ENCODE measurements at regions of chr6 and their contacts with region 1.

Region 1: DNA sequence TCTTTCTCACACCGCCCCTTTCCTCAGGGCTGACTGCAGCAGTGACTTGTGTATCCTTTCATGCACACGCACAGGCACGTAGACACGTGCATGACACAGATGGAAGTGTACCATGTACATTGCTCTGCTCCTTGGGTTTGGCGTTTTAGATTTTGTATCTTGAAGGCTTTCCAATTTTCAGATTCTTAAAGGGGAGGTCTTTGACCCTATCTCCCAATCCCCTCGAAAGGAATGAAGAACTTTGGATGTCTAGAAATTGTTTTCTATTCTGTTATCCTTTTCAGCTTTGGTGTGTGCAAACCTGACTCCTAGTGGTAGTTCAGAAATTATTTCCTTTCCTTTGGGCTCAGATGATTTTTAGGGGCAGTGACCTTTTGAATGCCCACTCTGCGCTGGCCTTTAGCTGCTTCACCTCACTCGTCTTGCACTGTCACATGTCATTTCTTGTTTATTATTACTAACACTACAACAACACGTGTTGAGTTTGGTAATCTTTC is 63.0 kb downstream of the HIVEP1 start:
- DNase-seq: peak; percentile 43
- ATAC-seq: no peak
- H3K4me3 ChIP-seq: no peak overlapping the region
- H3K4me3 Mint-ChIP-seq: no peak overlapping the region
- H3K27ac ChIP-seq: no peak overlapping the region
- H3K27ac Mint-ChIP-seq: no peak overlapping the region
- H3K4me1 ChIP-seq: peaks cover 0 to 6% of the 10 kb centered on the region in 2 donors
- H3K4me1 Mint-ChIP-seq: peaks cover 25% of the 10 kb centered on the region
- H3K27me3 ChIP-seq: no peaks in the 10 kb centered on the region
- H3K27me3 Mint-ChIP-seq: no peaks in the 10 kb centered on the region
- CTCF ChIP-seq: peak; percentile 69

Region 2: GRCh38 chr6:11700118-11700718 is 374.9 kb before region 1 on chr6:
- CTCF ChIA-PET with region 1: interaction called, 27 read pairs
- POLR2A ChIA-PET with region 1: no interaction called
- intact Hi-C with region 1: loop called (anchors 1 kb)
- DNase-seq: peak; percentile 61
- ATAC-seq: no peak
- H3K4me3 ChIP-seq: no peak overlapping the region
- H3K4me3 Mint-ChIP-seq: no peak overlapping the region
- H3K27ac ChIP-seq: no peak overlapping the region
- H3K27ac Mint-ChIP-seq: no peak overlapping the region
- H3K4me1 ChIP-seq: no peaks in the 10 kb centered on the region
- H3K4me1 Mint-ChIP-seq: no peaks in the 10 kb centered on the region
- H3K27me3 ChIP-seq: peaks cover 0 to 4% (median 2%) of the 10 kb centered on the region in 4 experiments
- H3K27me3 Mint-ChIP-seq: no peaks in the 10 kb centered on the region
- CTCF ChIP-seq: peak; percentile 69

Region 3: DNA sequence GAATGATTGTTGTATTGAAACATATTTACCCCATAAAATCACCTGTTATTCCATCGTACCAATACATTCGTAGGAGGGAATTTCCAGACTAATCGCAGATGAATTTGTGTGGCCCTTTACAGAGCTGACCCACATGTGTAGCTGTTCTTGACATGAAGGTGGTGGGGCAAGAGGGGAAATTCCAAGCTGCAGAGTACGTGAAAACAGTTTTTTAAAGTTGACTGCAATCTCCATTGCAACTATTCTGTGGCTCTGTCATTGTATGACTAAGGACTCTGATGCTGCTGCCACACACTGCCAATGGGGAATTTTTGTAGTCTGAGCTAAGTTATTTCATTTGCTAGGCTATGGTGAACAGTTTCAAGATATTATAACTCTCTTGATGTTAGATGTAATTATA is 250.1 kb before region 1 on chr6:
- CTCF ChIA-PET with region 1: interaction called, 7 read pairs
- POLR2A ChIA-PET with region 1: no interaction called
- intact Hi-C with region 1: loop called (anchors 1 kb)
- DNase-seq: peak; percentile 28
- ATAC-seq: peak; percentile 56
- H3K4me3 ChIP-seq: no peak overlapping the region
- H3K4me3 Mint-ChIP-seq: no peak overlapping the region
- H3K27ac ChIP-seq: no peak overlapping the region
- H3K27ac Mint-ChIP-seq: no peak overlapping the region
- H3K4me1 ChIP-seq: peaks cover 14 to 16% of the 10 kb centered on the region in 2 donors
- H3K4me1 Mint-ChIP-seq: peaks cover 30% of the 10 kb centered on the region
- H3K27me3 ChIP-seq: no peaks in the 10 kb centered on the region
- H3K27me3 Mint-ChIP-seq: no peaks in the 10 kb centered on the region
- CTCF ChIP-seq: no peak

Region 4: DNA sequence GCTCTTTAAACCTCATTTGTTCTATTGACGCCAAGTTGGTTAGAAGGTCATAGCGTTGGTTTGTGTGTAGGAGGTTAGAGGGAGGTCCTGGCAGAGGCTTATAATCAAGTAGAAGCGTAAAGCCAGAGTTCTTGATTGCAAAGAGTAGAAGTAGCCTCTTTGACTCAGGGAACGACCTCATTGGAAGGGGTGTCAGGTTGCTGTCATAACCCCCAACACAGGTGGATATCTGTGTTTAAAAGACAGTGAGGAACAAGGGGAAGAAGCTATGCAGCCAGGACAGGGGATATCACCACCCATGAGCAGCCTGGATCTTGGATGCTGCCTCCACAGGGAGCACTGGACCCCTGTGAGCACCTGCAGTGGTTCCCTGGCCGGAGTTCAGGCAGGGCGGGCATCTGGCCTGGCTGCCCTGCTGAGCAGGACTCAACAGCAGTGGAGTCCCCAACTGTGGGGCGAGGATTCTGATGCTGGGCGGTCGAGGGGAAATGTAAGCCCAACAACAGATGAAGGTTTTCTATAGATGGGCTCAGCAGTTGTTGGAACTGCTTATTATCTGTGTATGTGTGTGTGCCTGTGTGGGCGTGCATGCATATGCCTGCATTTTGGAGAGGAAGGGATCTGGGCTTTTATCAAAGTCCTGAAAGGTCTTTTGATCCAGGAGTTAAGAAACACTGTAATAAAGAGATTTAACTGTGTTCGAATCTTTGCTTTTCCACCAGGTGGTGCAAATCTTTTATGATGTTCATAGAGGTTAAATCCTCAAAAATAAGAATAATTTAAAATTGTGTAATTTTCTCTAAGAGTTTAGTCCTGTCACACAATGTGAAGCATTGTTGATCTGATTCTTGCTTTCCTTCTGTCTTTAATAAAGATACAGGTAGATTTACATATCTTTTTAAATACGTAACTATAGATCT is 35.3 kb before region 1 on chr6:
- CTCF ChIA-PET with region 1: interaction called, 4 read pairs
- POLR2A ChIA-PET with region 1: no interaction called
- intact Hi-C with region 1: loop called (anchors 5 kb)
- DNase-seq: no peak
- ATAC-seq: no peak
- H3K4me3 ChIP-seq: no peak overlapping the region
- H3K4me3 Mint-ChIP-seq: no peak overlapping the region
- H3K27ac ChIP-seq: peak overlapping the region in 1 of 2 donors; percentile 45
- H3K27ac Mint-ChIP-seq: peak overlapping the region; percentile 78
- H3K4me1 ChIP-seq: peaks cover 24 to 29% of the 10 kb centered on the region in 2 donors
- H3K4me1 Mint-ChIP-seq: peaks cover 61% of the 10 kb centered on the region
- H3K27me3 ChIP-seq: no peaks in the 10 kb centered on the region
- H3K27me3 Mint-ChIP-seq: no peaks in the 10 kb centered on the region
- CTCF ChIP-seq: no peak

Region 5: DNA sequence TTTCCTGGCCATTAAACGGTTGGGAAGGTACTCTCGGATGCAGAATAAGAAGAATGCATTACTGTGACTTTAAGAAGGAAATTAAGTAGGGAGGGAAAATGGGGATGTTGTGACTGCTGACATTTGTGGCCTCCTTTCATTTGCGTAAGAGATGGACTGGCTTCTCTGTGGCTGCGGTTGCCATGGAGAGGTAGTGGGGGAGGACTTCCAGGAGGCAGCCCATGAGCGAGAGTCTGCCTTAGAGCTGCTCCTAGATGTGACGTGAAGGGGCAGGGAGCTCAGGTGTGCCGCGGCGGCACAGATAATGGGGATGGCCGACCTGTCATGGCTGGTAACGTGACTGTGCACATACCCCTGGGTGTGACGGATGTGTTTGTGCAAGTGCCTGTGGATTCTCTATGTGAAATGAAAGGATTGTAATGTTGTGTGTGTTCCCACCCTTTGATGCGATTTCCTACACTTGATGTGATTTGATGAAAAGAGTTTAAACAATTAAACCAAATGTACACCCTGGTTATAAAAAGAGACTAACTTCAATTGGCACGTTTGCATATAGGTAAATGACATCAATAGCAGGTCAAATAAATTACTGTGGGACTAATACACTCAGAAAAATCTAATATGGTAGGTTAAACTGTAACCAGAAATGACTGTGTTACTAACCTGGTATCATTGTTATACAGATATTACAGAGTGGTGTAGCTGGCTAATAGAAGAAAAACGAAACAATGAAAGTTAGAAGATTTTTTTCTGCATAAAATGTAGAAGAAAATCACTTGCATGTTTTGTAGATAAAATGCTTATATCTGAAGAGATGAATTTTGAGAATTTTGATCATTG is 14.1 kb before region 1 on chr6:
- CTCF ChIA-PET with region 1: interaction called, 15 read pairs
- POLR2A ChIA-PET with region 1: no interaction called
- intact Hi-C with region 1: loop called (anchors 2 kb)
- DNase-seq: peak; percentile 91
- ATAC-seq: peak; percentile 90
- H3K4me3 ChIP-seq: peak overlapping the region in 4 of 5 experiments; percentile 23 to 58 (median 40)
- H3K4me3 Mint-ChIP-seq: peak overlapping the region; percentile 91
- H3K27ac ChIP-seq: peak overlapping the region; percentile 47 to 69
- H3K27ac Mint-ChIP-seq: peak overlapping the region; percentile 98
- H3K4me1 ChIP-seq: peaks cover 48 to 51% of the 10 kb centered on the region in 2 donors
- H3K4me1 Mint-ChIP-seq: peaks cover 68% of the 10 kb centered on the region
- H3K27me3 ChIP-seq: no peaks in the 10 kb centered on the region
- H3K27me3 Mint-ChIP-seq: no peaks in the 10 kb centered on the region
- CTCF ChIP-seq: no peak